GM10248 (cell line): ENCODE measurements at regions of chr22 and their contacts with region 1.

Region 1: DNA sequence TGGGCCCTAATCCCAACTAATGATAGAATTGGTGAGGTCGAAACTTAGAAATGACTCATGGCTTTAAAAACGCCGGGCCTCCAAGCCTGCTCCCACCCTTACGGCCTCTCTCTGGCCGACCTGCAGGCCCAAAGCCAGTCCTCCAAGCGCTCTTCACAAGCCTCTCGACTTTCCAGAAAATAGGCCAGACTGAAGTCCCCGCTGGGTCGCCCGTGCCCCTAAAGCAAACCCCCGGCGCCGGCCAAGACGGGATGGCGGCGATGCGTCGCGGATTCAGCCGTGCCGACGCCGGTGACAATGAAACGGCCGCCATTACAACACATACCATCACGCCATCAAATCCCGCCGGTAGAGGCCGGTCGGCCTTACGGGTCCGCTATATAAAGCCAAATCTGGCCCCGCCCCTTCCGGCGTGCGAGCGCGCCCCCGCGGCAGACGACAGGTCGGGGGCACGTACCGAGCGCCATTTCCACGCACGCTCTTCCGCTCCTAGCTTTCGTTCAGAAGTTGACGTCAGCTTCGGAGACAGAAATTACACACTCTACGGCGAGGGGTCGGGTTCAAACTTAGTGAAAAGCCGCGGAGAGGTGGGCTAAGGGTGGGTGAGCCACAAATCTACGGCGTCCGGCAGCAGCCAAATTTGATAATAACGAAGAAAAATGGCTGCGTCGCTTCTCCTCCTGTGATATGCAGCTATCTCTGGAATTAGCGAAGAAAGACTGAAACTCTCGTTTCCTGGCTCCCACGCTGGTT is at the start of gene RPL3:
- DNase-seq: peak; percentile 98
- CTCF ChIP-seq: no peak

Region 2: DNA sequence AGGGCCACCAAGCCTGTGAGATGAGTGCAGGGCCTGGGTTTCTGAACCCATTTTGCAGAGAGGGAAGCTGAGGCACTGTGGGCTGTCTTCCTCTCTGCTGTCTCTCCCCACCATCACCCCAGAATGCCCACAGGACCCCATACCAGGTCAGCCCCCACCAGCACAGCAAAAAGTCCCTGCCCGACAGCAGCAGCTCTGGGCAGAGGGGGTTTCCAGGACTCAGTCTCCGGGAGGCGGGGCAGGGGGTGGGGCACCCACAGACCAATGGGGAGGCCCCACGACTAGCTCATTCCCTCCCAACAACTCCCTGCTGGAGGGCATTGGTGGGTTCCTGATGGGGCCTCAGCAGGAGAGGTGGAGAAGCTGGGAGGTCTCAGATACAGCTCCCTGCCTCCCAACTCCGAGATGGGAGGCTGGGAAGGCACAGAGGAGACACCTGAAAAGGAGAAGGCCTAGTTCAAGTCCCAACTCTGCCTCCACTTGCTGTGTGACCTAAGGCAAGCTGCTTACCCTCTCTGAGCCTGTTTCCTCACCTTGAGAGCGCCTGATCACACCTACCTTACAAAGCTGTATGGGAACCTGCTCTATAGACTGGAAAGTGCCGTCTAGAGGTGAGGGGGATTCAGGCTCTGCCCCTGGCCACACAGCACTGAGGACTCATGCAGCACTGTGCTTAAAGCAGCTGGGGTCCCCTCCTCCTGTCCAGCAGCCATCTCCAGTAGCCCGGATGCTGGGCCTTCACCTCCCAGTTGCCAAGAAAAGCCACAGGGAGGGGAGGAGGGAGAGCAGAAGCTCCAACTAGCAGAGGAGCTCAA is 170.5 kb before region 1 on chr22:
- CTCF ChIA-PET with region 1: interaction called, 4 read pairs
- POLR2A ChIA-PET with region 1: interaction called, 11 read pairs
- DNase-seq: peak; percentile 86
- CTCF ChIP-seq: no peak

Region 3: DNA sequence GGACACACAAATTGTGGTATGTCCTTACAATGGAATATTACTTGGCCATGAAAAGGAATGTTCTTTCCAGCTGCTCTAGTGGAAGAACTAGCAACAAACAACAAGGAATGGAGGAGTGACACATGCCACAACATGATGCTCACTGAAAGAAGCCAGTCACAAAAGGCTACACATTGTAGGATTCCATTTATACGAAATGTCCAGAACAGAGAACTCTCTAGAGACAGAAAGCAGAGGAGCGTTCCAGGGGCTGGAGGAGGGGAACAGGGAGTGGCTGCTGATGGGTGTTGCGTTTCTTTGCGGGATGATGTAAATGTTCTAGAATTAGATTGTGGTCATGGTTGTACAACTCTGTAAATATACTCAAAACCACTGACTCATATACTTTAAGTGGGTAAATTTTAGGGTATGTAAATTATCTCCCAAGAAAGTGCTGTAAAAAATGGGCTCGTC is 42.3 kb before region 1 on chr22:
- CTCF ChIA-PET with region 1: no interaction called
- POLR2A ChIA-PET with region 1: no interaction called
- DNase-seq: no peak
- CTCF ChIP-seq: no peak

Region 4: DNA sequence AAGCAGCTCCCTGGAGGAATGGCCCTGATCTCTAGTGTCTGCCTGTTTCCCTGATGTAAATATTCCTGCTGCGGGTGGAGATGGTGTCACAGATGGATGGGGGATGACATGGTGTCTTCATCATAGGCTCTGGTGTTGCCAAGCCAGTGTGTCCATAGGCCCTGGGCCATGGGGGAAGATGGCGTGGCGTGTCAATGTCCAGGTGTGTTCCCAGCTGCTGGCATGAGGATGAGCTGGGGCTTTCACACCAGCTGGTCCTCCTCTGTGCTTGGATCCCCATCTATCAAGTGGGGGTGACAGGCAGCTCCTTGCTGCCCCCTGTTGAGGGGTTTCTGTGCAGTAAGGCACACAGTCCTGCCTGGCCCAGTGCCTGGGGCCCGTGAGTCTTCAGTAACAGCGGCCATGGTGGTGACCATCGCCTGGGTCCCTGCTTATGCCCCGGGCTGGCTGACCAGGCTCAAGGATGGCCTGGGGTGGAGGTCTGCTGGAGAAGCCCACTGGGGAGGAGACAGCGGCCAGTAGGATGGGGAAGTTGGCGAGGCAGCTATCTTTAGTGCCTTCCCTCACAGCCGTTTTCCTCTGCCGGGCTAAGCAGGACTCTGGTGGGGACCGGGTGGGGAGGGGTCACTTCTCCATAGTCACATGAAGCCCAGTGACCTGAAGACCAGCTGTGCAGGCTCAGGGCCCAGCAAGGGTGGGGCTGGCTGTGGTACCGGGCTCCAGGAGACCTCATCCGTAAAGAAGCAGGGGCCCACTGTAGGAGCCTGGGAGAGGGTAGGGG is 12.7 kb before region 1 on chr22:
- CTCF ChIA-PET with region 1: interaction called, 72 read pairs
- POLR2A ChIA-PET with region 1: interaction called, 69 read pairs
- DNase-seq: no peak
- CTCF ChIP-seq: peak; percentile 47

Region 5: DNA sequence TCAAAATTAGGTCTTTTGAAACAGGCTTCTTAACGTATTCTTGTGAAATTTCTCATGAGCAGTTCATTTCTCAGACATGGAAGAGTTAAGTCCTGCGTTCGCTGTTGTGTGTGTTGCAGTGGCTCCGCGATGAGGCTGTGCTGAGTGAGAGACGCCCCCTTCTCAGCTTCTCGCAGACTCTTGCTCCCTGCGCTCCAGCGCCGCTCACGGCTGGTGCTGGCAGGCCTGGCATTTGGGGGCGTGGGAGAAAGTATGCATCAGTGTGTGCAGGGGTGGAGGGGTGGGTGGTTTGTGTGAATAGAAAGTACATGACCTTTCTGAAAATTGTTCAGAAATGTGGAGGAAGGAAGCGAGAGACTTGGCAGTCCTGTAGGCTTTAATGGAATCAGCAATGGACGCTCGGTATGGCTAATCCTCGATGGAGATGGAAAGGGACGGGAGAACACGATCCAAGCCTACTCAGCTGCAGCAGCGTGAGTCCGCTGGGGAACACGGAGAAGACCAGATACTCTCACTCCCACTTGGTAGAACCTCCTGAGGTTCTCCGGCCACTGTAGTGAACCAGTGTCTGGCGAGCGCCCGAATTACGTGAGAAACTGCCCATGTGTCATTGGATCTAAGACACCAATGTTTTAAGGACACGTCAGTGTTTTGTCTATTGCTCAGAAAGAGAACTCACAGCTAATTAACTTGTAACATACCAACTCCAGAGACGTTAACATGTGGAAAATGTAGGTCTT is 86.1 kb after region 1 on chr22:
- CTCF ChIA-PET with region 1: no interaction called
- POLR2A ChIA-PET with region 1: interaction called, 12 read pairs
- DNase-seq: no peak
- CTCF ChIP-seq: no peak

Region 6: GRCh38 chr22:39520054-39520891 is 200.8 kb after region 1 on chr22 and contains the start of gene ATF4:
- CTCF ChIA-PET with region 1: interaction called, 11 read pairs
- POLR2A ChIA-PET with region 1: interaction called, 14 read pairs
- DNase-seq: peak; percentile 97
- CTCF ChIP-seq: no peak